ENCODE measurements at regions of chr17 and their contacts with region 1.

Region 1: GRCh38 chr17:82351716-82352488 is 7.1 kb upstream of the TEX19 start:
- DNase-seq: peak; percentile 73
- H3K4me3 Mint-ChIP-seq: no peak overlapping the region
- H3K27ac Mint-ChIP-seq: no peak overlapping the region
- H3K4me1 Mint-ChIP-seq: peaks cover 4% of the 10 kb centered on the region
- H3K27me3 Mint-ChIP-seq: peaks cover 5% of the 10 kb centered on the region

Region 2: DNA sequence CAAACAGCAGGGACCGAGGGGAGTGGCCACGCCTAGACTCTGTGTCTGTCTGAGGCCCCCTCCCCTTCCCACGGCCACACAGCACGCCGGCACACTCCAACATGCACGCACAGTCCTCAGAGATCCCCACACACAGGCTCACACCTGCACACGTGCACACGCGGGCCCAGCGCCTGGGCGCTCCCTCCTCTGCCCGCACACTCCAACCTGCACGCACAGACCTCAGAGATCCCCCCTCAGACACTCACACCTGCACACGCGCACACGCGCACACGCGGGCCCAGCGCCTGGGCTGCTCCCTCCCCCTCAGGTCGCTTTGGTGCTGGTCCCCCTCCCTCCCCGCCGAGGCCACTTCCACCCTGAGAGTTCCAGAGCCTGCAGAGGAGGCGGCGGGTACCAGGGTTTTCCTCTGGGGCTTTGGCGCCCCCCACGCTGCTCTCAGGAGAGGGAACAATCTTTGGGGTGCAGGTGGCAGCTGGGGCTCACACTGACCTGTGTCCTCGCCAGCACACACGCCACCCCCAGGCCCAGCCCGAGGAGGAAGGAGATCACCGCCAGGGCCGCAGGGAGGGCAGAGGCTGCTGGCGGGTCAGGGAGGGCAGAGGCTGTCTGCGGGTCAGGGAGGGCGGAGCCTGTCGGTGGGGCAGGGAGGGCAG is 36.1 kb before region 1 on chr17:
- intact Hi-C with region 1: no loop called
- DNase-seq: no peak
- H3K4me3 Mint-ChIP-seq: no peak overlapping the region
- H3K27ac Mint-ChIP-seq: peak overlapping the region; percentile 80
- H3K4me1 Mint-ChIP-seq: peaks cover 12% of the 10 kb centered on the region
- H3K27me3 Mint-ChIP-seq: no peaks in the 10 kb centered on the region

Region 3: DNA sequence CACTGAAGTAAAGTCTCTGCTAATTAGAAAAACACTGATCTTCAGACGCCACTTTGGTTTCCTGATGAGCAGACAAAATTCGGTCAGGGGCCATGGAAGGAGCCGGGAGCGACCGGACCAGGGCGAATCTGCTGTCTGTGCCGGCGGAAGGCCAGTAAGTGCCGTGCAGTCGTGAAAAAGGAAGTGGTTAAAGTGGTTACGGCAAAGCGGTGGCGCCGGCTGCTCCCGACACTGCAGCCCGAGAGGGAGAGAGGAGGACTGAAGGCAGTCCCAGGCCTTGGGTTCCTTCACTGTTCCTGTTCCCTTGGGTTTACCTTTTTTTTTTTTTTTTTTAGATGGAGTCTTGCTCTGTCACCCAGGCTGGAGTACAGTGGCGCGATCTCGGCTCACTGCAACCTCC is 48.9 kb after region 1 on chr17:
- intact Hi-C with region 1: no loop called
- DNase-seq: peak; percentile 49
- H3K4me3 Mint-ChIP-seq: peak overlapping the region; percentile 63
- H3K27ac Mint-ChIP-seq: peak overlapping the region; percentile 9
- H3K4me1 Mint-ChIP-seq: peaks cover 12% of the 10 kb centered on the region
- H3K27me3 Mint-ChIP-seq: no peaks in the 10 kb centered on the region

Region 4: DNA sequence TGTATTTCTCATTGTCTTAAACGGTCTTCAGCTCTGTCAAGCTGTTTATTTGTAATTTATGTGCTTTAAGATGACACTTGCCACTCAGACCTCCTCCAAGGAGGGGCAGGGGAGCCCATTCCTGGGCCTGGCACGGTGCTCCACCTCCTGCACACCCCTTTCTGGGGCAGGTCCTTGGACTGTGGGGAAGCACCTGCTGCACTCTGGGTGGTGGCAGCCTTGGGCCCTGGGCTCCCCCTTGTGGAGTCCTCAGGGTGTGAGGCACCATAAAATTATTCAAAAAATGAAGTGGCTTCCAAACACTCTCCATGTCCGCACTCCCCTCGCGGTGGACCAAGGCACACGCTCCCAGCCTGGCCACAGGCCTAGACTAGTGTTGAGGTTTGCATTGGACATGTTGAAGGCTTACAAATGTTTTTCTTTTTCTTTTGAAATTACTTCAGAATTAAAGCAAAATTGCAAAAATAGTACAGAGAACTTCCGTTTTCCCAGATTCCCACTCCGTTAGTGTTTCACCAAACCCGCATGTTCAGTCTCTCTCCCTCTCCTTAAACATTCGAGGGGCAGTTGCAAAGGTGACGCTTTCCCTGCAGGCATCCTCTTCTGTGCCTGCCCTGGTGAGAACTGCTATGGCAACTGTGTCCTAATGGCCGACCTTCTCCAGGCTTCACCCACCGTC is 200.0 kb after region 1 on chr17:
- intact Hi-C with region 1: loop called (anchors 2 kb)
- DNase-seq: peak; percentile 70
- H3K4me3 Mint-ChIP-seq: no peak overlapping the region
- H3K27ac Mint-ChIP-seq: no peak overlapping the region
- H3K4me1 Mint-ChIP-seq: peaks cover 27% of the 10 kb centered on the region
- H3K27me3 Mint-ChIP-seq: no peaks in the 10 kb centered on the region

Region 5: DNA sequence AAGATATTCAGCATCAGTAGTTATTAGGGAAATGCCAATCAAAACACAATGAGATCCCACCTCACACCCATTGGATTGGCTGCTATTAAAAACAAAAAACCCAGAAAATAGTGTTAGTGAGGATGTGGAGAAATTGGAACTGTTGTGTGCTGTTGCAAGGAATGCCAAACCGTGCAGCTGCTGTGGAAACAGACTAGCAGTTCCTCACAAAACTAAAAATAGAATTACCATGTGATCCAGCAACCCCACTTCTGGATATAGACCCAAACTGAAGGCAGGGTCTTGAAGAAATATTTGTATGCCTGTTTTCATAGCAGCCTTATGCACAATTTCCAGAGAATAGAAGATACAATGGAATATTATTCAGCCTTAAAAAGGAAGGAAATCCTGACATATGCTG is 213.6 kb after region 1 on chr17:
- intact Hi-C with region 1: no loop called
- DNase-seq: no peak
- H3K4me3 Mint-ChIP-seq: no peak overlapping the region
- H3K27ac Mint-ChIP-seq: no peak overlapping the region
- H3K4me1 Mint-ChIP-seq: no peaks in the 10 kb centered on the region
- H3K27me3 Mint-ChIP-seq: no peaks in the 10 kb centered on the region

Region 6: DNA sequence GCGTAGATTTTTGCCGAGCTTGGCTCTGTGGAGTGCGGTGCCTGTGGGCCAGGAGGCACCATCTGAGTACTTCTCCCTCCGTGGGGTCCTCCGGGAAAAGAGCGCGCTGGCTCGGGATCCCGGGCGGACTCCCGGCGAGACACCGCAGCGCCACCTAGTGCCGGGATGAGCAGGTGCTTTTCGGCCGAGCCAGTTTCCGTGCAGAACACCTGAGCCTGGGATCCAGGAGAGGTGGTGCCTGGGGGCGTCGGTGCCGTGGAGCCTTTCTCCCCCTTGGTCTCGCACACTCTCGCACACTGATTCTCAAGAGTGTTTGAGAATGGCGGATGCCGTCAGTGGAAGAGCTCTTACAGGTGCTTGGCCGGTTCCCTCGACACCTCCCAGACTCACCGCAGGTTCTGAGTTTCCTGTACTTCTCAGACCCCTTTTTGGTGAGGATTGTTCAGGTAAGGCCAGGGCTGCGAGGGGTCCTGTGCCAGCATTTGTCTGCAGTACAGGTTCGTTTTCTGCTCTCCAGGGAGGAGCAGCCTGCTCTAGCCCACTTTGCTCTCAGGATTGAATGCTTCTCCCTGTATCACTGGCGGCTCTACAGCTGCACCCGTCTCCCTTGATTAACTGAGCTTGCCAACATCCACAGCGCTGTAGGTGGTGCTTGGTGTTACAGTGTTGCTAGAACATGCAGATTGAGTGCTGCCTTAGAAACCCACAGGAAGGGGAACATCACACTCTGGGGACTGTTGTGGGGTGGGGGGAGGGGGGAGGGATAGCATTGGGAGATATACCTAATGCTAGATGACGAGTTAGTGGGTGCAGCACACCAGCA is 423.3 kb after region 1 on chr17:
- intact Hi-C with region 1: loop called (anchors 10 kb)
- DNase-seq: peak; percentile 24
- H3K4me3 Mint-ChIP-seq: no peak overlapping the region
- H3K27ac Mint-ChIP-seq: no peak overlapping the region
- H3K4me1 Mint-ChIP-seq: peaks cover 6% of the 10 kb centered on the region
- H3K27me3 Mint-ChIP-seq: no peaks in the 10 kb centered on the region